Dorsolateral prefrontal cortex (tissue), 120 donors: ENCODE measurements at regions of chr16 and their contacts with region 1.

Region 1: DNA sequence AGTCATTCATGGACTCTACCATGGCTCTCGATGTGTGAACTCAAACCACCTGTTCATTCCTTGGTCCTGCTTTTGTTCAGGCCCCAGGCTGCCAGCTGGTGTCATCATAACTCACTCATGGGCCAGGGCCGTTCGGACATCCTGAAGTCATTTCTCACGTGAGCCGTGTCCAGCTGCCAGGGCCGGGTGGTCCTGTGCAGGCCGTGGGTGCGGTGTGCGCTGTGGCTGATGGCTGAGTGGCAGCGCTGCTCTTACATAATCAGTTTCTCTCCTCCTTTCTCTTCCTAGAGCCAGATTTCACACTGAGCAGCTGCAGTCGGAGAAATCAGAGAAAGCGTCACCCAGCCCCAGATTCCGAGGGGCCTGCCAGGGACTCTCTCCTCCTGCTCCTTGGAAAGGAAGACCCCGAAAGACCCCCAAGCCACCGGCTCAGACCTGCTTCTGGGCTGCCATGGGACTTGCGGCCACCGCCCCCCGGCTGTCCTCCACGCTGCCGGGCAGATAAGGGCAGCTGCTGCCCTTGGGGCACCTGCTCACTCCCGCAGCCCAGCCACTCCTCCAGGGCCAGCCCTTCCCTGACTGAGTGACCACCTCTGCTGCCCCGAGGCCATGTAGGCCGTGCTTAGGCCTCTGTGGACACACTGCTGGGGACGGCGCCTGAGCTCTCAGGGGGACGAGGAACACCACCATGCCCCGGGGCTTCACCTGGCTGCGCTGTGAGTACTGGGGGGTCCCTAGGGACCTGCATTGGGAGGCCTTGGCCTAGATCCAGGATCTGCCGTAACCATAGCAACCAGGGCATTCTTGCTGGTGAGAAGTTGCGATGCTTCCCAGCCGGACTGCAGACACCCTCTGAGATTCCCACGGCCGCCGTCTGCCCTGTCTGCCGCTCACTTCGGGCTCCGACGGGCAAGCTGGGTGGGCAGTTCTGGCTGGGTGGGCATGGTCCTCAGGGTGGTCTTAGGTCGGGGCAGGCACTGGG is at the start of gene IL34:
- DNase-seq: peak in 2 of 10 donors; percentile 42 to 68
- H3K4me3 ChIP-seq: peak within 1 kb of the TSS; percentile 14 to 70 (median 56)
- H3K27ac ChIP-seq: peak within 1 kb of the TSS in 58 of 59 donors; percentile 4 to 97 (median 83)
- H3K27me3 ChIP-seq: no peaks in the 10 kb centered on the region
- CTCF ChIP-seq: no peak
- total RNA-seq, gene IL34: 5.0 to 52.7 (median 20.4) TPM

Region 2: GRCh38 chr16:70561623-70562022 is 84.9 kb before region 1 on chr16:
- intact Hi-C with region 1: loop called in 1 of 2 experiments (anchors 10 kb)
- DNase-seq: peak in 9 of 10 donors; percentile 37 to 78 (median 56)
- H3K4me3 ChIP-seq: no peak overlapping the region
- H3K27ac ChIP-seq: peak overlapping the region in 9 of 59 donors; percentile 5 to 43 (median 27)
- H3K27me3 ChIP-seq: no peaks in the 10 kb centered on the region
- CTCF ChIP-seq: no peak

Region 3: GRCh38 chr16:70661918-70662641 is 15.5 kb after region 1 on chr16:
- intact Hi-C with region 1: no loop called
- DNase-seq: peak in 1 of 10 donors; percentile 78
- H3K4me3 ChIP-seq: no peak overlapping the region
- H3K27ac ChIP-seq: peak overlapping the region in 42 of 59 donors; percentile 4 to 87 (median 64)
- H3K27me3 ChIP-seq: no peaks in the 10 kb centered on the region
- CTCF ChIP-seq: no peak

Region 4: GRCh38 chr16:70675851-70676513 is 29.4 kb after region 1 on chr16:
- intact Hi-C with region 1: no loop called
- DNase-seq: peak in 2 of 10 donors; percentile 15 to 35
- H3K4me3 ChIP-seq: no peak overlapping the region
- H3K27ac ChIP-seq: peak overlapping the region in 40 of 59 donors; percentile 9 to 97 (median 62)
- H3K27me3 ChIP-seq: no peaks in the 10 kb centered on the region
- CTCF ChIP-seq: no peak

Region 5: DNA sequence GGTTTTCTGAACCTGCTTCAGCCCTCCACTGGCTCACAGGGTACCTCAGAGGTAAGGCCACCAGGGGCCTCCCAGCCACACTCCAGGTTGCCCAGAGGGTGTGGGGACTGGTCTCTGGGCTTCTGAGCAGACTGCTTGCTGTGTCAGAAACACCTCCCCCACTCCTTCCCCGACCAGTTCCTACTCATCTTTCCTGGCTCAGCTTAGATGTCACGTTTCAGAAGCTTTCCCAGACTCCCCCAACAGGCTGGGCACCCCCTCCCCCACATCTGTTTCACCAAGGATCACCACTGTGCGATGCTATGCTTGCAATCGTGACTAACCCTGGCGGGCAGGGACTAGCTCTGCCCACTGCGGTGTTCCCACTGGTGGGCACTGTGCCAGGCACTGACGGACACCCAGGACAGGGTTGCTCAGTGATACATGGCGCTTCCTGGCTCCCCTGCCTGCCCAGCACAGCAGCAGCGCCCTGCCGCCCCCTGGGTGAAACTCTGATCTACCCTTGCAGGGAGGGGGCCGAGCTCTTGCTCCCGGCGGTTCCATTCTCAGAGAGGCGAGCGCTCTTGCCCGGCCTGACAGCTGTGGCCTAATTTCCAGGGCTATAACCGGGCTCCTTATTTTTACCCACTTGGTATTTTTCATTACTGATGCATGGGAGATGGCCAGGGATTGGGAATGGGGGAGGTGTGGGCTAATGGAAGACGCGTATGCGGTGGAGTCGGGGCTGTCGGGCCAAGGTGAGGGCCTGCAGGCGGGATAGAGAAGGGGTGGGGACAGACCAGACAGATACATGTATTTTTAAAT is 68.7 kb after region 1 on chr16:
- intact Hi-C with region 1: no loop called
- DNase-seq: peak in 7 of 10 donors; percentile 37 to 92 (median 80)
- H3K4me3 ChIP-seq: peak overlapping the region in 10 of 59 donors; percentile 4 to 36 (median 12)
- H3K27ac ChIP-seq: peak overlapping the region in 57 of 59 donors; percentile 30 to 95 (median 78)
- H3K27me3 ChIP-seq: no peaks in the 10 kb centered on the region
- CTCF ChIP-seq: no peak